Activated naive CD4-positive, alpha-beta T cell treated with anti-CD3 and anti-CD28 coated beads for 36 hours (primary cell): ENCODE measurements at regions of chr16 and their contacts with region 1.

Region 1: GRCh38 chr16:28823872-28824716 is 1.3 kb downstream of the ATXN2L start:
- DNase-seq: peak; percentile 99
- H3K4me3 Mint-ChIP-seq: peak overlapping the region; percentile 92
- H3K27ac Mint-ChIP-seq: peak overlapping the region; percentile 98
- H3K4me1 Mint-ChIP-seq: peaks cover 50% of the 10 kb centered on the region
- H3K27me3 Mint-ChIP-seq: no peaks in the 10 kb centered on the region

Region 2: DNA sequence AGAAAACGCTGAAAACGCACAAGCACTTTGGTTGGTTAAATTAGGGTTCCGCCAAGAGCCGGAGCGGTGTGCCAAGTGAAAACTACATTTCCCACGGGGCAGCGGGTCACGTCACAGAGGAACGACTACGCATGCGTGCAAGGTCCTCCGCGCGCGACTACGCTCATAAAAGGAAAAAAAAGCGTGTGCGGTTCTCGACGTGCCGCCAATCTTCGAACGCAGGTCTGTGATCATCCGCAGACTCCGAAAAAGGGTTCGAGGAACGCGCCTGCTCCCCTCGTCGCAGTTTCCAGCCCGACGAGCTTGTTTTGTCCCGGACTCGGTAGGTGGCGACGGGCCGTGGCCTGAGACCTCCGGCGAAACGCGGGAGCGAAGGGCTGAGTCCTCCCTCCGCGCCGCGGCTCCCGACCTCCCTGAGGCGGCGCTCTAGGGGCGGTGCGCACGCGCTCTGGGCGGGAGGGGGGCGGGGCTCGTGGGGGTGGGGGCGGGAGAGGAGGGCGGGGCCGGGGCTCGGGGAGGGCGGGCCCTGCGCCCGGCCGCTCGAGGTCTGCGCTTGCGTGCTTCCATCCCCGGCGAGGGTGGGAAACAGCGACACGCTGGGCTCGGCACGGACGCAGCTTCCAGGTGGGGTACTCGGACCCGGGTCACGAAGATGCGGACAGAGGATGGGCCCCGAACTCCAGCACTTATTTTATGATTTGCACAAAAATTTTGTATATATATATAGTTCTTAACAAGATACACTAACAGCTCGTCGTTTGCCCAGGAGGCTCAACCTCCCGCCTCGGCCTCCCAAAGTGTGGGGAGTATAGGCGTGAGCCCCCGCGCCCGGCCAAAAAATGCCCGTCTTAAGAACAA is 270.1 kb before region 1 on chr16 and contains the start of gene SGF29:
- CTCF ChIA-PET with region 1: no interaction called
- intact Hi-C with region 1: loop called (anchors 1 kb)
- DNase-seq: peak; percentile 96
- H3K4me3 Mint-ChIP-seq: peak within 1 kb of the TSS; percentile 93
- H3K27ac Mint-ChIP-seq: peak within 1 kb of the TSS; percentile 97
- H3K4me1 Mint-ChIP-seq: peaks cover 41% of the 10 kb centered on the region
- H3K27me3 Mint-ChIP-seq: no peaks in the 10 kb centered on the region
- total RNA-seq, gene SGF29: 15.9 TPM

Region 3: DNA sequence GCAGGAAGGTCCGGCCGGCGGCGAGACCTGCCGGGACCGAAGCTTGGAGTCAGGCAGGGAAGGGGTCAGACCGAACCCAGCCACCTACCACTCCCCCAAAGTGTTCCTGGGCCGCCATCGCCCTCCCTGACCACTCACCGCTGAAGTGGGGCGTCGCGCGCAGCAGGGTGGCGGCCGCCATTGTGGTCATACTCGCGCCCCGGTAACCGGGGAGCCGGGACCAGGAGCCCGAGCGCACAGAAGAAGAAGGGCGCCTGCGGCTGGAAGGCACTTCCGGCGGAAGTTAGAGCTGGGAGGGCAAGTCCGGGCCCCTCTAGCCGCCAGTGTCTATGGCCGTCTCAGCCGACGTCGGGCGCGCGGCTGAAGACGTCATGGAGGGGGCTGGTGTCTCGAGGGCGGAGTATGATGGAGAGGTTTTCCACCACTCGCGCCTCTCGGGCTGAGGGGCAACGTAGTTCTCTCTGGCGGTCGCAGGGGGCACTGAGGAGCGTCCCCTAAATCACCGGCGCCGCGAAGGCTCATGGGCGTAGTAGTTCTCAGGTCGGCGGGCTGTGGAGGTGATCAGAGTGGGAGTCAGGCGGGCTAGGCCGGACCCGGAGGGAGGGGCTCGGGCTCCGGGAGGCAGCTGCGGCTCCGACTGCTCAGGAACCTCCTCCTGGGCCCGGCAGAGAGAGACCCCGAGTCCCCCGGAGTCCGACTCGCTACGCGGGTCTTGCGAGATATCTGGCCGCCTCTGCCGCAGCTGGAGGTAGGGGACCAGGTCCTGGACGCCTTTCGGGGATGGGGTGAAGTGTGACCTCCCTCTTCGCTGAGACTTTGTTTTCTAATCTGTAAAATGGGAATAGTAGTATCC is 22.2 kb after region 1 on chr16 and contains the start of gene TUFM:
- CTCF ChIA-PET with region 1: interaction called, 4 read pairs
- intact Hi-C with region 1: loop called (anchors 1 kb)
- DNase-seq: peak; percentile 98
- H3K4me3 Mint-ChIP-seq: peak within 1 kb of the TSS; percentile 98
- H3K27ac Mint-ChIP-seq: peak within 1 kb of the TSS; percentile 96
- H3K4me1 Mint-ChIP-seq: peaks cover 28% of the 10 kb centered on the region
- H3K27me3 Mint-ChIP-seq: no peaks in the 10 kb centered on the region
- total RNA-seq, gene TUFM: 276 to 289 TPM

Region 4: DNA sequence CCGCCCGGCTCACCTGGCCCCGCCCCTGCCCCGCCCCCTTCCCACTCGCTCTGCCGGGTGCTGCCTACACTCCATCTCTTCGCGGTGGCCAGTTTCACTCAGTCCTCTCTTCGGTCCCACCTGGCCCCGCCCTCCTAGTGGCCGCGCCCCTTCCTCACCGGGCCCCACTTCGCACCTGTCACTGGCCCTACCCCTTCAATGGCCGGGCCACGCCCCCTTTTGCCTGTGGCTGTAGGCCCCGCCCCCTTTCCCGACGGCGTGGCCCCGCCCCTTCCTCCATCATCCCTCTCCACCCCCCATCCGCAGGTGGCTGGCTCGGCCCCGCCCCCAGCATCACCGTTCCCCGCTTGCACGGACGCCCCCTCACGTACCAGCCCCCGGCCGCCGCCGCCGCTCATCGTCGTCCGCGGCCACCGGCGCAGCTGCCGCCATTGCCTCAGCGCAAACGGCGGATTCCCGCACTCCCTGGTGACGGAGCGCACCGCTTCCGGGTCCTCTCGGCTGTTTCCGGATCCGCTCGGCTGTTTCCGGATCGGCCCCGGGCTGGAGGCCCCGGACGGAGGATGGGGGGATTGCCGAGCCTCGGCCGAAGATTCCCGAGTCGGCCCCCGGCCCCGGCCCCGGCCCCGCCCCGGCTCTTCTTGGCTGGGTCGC is 100.8 kb after region 1 on chr16 and contains the start of gene RABEP2:
- CTCF ChIA-PET with region 1: no interaction called
- intact Hi-C with region 1: loop called (anchors 1 kb)
- DNase-seq: peak; percentile 97
- H3K4me3 Mint-ChIP-seq: peak within 1 kb of the TSS; percentile 97
- H3K27ac Mint-ChIP-seq: peak within 1 kb of the TSS; percentile 99
- H3K4me1 Mint-ChIP-seq: peaks cover 18% of the 10 kb centered on the region
- H3K27me3 Mint-ChIP-seq: no peaks in the 10 kb centered on the region
- total RNA-seq, gene RABEP2: 11.6 to 14.0 TPM